ENCODE measurements at regions of chr4 and their contacts with region 1.

Region 1: DNA sequence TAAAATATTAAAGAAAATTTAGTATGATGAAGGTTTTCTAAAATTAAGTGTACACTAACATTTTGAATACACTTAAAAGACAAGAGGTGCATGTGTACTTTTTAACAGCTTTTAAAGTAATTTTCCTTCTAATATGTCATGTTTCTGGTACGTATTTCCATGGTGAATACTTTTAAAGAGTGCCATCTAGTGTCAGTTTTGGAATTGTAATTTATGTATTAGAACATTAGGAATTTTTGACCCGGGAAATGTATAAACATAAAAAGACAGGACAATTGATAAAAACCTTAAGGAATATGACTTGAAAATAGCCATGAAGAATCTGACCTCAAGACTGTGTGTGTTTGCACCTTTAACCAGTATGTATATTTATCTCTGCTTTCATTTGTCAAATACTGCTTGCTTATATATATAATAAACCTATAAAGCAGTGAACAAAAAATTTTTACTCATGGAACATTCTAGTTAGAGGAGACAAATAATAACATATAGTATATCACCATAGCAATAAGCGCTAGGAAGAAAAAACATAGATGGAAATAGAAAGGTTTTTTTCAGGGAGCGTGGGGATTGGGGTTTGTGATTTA is 7.2 kb downstream of the GSTCD start:
- DNase-seq: peak; percentile 64
- ATAC-seq: no peak
- H3K4me3 ChIP-seq: no peak overlapping the region
- H3K27ac ChIP-seq: no peak overlapping the region
- H3K4me1 ChIP-seq: peaks cover 37% of the 10 kb centered on the region
- H3K27me3 ChIP-seq: no peaks in the 10 kb centered on the region
- CTCF ChIP-seq: peak; percentile 65

Region 2: DNA sequence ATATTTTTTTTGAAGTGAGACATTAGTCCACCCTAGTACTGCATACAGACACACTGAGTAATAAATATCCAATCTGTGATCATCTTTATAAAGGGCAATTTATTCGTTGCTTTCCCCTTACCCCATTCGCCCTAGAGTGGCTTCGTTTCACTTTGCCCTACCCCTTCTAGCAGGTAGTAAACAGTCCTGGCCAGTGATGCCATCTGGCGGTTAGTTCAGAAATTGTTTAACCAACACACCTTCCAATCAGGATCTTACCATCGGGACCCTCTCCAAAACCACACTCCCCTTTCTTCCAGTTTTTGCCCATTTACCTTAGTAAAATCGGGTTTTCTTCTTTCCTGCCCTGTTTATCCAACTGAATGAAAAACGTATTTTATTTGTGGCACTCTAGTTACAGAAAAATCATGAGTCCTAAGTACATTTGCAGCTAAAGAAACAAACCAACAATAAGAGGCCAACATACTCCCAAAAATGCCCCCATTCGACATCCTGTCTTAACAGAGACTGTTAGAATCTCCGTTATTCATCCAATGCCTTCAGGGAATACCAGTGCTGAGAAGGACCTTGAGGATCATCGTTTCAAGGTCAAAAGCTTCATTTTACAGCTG is 244.1 kb before region 1 on chr4:
- CTCF ChIA-PET with region 1: no interaction called
- POLR2A ChIA-PET with region 1: no interaction called
- intact Hi-C with region 1: loop called (anchors 5 kb)
- DNase-seq: peak; percentile 78
- ATAC-seq: peak; percentile 46
- H3K4me3 ChIP-seq: peak overlapping the region; percentile 94
- H3K27ac ChIP-seq: no peak overlapping the region
- H3K4me1 ChIP-seq: peaks cover 20% of the 10 kb centered on the region
- H3K27me3 ChIP-seq: no peaks in the 10 kb centered on the region
- CTCF ChIP-seq: peak; percentile 73

Region 3: DNA sequence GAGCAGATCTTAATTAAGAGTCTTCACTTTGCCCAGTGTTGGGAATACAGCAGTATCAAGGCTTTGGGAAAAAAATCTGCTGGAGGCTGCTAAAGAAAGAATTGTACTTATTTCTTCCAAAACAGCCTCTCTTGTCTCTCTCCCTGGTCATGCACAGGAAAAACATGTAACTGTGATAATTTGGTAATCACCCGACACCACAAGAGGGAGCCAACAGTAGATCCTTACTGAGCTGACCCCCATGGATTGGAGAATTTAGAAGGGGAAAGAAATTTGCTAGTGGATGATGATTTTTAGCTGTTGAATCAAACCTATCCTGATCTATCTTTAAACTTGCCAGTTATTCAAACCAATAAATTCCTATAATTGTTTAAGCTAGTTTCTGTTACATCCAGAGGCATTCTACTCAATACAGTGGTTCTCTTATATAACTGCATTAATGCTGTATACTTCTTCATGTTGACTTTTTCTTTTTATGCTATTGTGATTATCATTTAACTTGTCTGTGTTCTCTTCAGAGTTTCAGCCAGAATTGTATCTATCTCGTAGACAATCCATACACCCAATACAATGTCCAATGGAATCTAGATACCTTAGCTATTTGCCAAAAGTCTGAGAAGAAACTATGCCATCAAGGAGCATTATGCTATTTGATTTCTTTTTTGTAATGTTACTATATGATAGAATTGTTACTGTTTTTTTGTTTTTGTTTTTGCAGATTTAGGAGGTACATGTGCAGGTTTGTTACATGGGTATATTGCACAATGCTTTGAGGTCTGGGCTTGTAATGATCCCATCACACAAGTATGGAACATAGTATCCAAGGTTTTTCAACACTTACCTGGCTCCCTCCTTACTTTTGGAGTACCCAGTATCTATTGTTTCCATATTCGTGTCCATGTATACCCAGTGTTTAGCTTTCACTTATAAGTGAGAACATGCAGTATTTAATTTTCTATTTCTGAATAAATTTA is 194.7 kb before region 1 on chr4:
- CTCF ChIA-PET with region 1: no interaction called
- POLR2A ChIA-PET with region 1: no interaction called
- intact Hi-C with region 1: loop called (anchors 10 kb)
- DNase-seq: peak; percentile 61
- ATAC-seq: peak; percentile 77
- H3K4me3 ChIP-seq: no peak overlapping the region
- H3K27ac ChIP-seq: no peak overlapping the region
- H3K4me1 ChIP-seq: no peaks in the 10 kb centered on the region
- H3K27me3 ChIP-seq: no peaks in the 10 kb centered on the region
- CTCF ChIP-seq: peak; percentile 78

Region 4: DNA sequence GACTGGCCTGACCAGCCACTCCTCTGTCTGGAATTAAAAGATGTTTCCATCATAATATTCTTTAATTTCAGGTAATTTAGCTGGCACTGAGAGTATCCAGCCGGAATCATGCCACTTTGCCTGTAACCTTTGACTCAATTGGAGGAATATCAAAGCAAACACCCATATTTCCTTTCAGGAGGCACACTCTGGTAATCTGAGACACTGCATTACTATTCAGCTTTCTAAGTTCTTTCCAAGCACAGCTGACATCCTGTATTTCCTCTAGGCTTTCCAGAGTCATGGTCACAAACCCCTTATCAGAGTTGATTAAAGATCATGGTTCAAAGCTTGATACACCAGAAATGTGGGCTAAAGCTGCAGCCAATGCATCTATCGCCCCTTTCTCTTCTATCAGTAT is 36.6 kb before region 1 on chr4:
- CTCF ChIA-PET with region 1: interaction called, 4 read pairs
- POLR2A ChIA-PET with region 1: interaction called, 5 read pairs
- intact Hi-C with region 1: loop called (anchors 5 kb)
- DNase-seq: peak; percentile 65
- ATAC-seq: peak; percentile 69
- H3K4me3 ChIP-seq: no peak overlapping the region
- H3K27ac ChIP-seq: no peak overlapping the region
- H3K4me1 ChIP-seq: peaks cover 54% of the 10 kb centered on the region
- H3K27me3 ChIP-seq: no peaks in the 10 kb centered on the region
- CTCF ChIP-seq: no peak

Region 5: DNA sequence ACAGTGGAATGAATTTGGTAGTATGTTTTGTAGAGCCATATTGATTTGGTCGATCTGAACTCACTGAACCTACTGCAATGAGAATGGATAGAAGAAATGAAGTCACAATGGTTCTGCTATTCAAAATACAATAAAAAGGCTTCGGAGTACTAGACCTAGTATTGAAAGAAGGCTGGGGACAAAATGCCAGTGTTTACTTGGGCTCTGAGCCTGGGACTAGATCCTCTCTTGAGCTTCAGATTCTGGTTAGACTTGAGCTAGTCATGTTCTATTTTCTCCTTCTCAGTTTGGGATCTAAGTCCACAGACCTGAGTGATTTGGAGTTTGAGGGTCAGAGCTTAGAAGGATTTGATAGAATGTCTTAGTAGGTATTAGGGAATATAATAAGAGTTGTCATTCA is 17.2 kb before region 1 on chr4:
- CTCF ChIA-PET with region 1: no interaction called
- POLR2A ChIA-PET with region 1: no interaction called
- intact Hi-C with region 1: no loop called
- DNase-seq: no peak
- ATAC-seq: no peak
- H3K4me3 ChIP-seq: no peak overlapping the region
- H3K27ac ChIP-seq: no peak overlapping the region
- H3K4me1 ChIP-seq: 0 out of 2 replicates have a peak, but pooled peaks cover 2% of the 10 kb centered on the region
- H3K27me3 ChIP-seq: no peaks in the 10 kb centered on the region
- CTCF ChIP-seq: no peak

Region 6: DNA sequence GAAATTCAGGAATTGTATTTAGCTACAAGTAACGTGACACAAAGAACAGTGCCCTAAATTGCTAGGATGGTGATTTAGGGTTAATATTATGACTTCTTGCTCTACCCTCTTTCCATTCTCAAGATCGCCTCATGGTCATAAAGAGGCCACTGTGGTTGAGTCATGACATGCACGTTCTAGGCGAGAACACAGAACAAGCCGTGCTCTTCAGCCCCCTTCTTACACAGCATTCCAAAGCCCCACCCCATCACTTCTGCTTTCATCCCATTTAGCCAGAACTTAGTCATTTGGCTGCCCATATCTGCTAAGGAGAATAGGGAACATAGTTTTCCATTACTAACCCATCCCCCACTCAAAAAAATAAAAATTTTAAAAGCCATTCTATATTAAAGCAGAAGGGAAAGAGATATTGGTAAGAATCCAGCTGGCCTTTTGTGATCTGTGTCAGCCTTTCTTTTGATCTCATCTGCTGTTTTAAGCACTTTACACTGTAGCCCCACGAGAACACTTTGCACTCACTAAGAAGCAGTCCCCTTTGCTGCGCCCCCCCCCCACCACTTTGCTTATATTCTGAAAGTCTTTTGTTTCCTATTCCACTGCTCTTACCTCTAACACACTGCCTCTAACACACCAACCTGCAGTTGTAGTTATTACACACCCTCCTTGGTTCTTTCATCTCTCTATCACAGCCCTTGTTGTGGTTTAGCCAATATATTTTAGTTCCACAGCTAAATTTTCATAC is 207.9 kb after region 1 on chr4:
- CTCF ChIA-PET with region 1: no interaction called
- POLR2A ChIA-PET with region 1: interaction called, 10 read pairs
- intact Hi-C with region 1: no loop called
- DNase-seq: peak; percentile 6
- ATAC-seq: no peak
- H3K4me3 ChIP-seq: no peak overlapping the region
- H3K27ac ChIP-seq: no peak overlapping the region
- H3K4me1 ChIP-seq: peaks cover 3% of the 10 kb centered on the region; the same call in 1 of the 2 replicates
- H3K27me3 ChIP-seq: no peaks in the 10 kb centered on the region
- CTCF ChIP-seq: no peak

Region 7: GRCh38 chr4:106062452-106062875 is 346.7 kb after region 1 on chr4:
- CTCF ChIA-PET with region 1: no interaction called
- POLR2A ChIA-PET with region 1: no interaction called
- intact Hi-C with region 1: loop called (anchors 10 kb)
- DNase-seq: peak; percentile 79
- ATAC-seq: peak; percentile 65
- H3K4me3 ChIP-seq: no peak overlapping the region
- H3K27ac ChIP-seq: 0 out of 2 replicates have a peak overlapping the region, but pooled peaks have one; percentile 13
- H3K4me1 ChIP-seq: peaks cover 29% of the 10 kb centered on the region
- H3K27me3 ChIP-seq: no peaks in the 10 kb centered on the region
- CTCF ChIP-seq: no peak

Region 8: GRCh38 chr4:106201373-106201772 is 485.6 kb after region 1 on chr4:
- CTCF ChIA-PET with region 1: no interaction called
- POLR2A ChIA-PET with region 1: no interaction called
- intact Hi-C with region 1: loop called (anchors 10 kb)
- DNase-seq: peak; percentile 33
- ATAC-seq: peak; percentile 59; the same call in 1 of the 2 replicates
- H3K4me3 ChIP-seq: no peak overlapping the region
- H3K27ac ChIP-seq: no peak overlapping the region
- H3K4me1 ChIP-seq: no peaks in the 10 kb centered on the region
- H3K27me3 ChIP-seq: no peaks in the 10 kb centered on the region
- CTCF ChIP-seq: peak; percentile 71

Region 9: GRCh38 chr4:106369456-106370060 is 653.8 kb after region 1 on chr4:
- CTCF ChIA-PET with region 1: no interaction called
- POLR2A ChIA-PET with region 1: no interaction called
- intact Hi-C with region 1: no loop called
- DNase-seq: peak; percentile 73
- ATAC-seq: peak; percentile 56
- H3K4me3 ChIP-seq: no peak overlapping the region
- H3K27ac ChIP-seq: no peak overlapping the region
- H3K4me1 ChIP-seq: peaks cover 8% of the 10 kb centered on the region
- H3K27me3 ChIP-seq: no peaks in the 10 kb centered on the region
- CTCF ChIP-seq: peak; percentile 79